Tibial artery (tissue), 4 donors: ENCODE measurements at regions of chr16 and their contacts with region 1.

Region 1: GRCh38 chr16:22677024-22677830 is 136.7 kb upstream of the HS3ST2 start:
- DNase-seq: peak in 1 of 2 donors; percentile 65
- H3K4me3 ChIP-seq: no peak overlapping the region
- H3K27ac ChIP-seq: no peak overlapping the region
- H3K4me1 ChIP-seq: peaks cover 0 to 14% (median 1%) of the 10 kb centered on the region in 4 donors
- H3K27me3 ChIP-seq: peaks cover 0 to 5% of the 10 kb centered on the region in 2 donors
- CTCF ChIP-seq: no peak

Region 2: DNA sequence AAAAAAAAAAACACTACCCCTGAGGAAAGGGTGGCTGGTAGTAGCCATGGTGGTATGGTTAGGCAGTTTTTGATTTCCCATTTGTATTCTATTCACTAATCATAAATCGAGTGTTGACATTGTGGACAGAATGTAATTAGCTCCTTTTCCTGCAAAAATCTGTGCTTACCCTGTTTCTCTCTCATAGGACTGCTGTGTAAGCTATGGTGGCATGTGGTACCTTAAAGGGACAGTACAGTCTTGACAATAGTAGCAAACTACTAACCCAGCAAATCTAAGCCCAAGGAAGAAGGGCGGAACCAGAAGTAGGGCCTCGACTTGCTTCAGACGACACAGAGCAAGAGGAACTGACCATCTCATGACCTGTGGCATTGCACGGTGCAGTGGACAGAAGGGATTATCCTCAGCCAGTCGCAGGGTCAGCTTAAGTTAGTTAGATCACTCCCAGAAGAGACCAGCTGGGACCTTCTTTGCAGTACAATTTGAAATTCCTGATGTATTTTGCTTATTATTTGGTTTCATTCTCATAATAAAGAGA is 343.7 kb before region 1 on chr16:
- intact Hi-C with region 1: no loop called
- DNase-seq: peak in 1 of 2 donors; percentile 54
- H3K4me3 ChIP-seq: no peak overlapping the region
- H3K27ac ChIP-seq: no peak overlapping the region
- H3K4me1 ChIP-seq: no peaks in the 10 kb centered on the region
- H3K27me3 ChIP-seq: no peaks in the 10 kb centered on the region
- CTCF ChIP-seq: no peak

Region 3: DNA sequence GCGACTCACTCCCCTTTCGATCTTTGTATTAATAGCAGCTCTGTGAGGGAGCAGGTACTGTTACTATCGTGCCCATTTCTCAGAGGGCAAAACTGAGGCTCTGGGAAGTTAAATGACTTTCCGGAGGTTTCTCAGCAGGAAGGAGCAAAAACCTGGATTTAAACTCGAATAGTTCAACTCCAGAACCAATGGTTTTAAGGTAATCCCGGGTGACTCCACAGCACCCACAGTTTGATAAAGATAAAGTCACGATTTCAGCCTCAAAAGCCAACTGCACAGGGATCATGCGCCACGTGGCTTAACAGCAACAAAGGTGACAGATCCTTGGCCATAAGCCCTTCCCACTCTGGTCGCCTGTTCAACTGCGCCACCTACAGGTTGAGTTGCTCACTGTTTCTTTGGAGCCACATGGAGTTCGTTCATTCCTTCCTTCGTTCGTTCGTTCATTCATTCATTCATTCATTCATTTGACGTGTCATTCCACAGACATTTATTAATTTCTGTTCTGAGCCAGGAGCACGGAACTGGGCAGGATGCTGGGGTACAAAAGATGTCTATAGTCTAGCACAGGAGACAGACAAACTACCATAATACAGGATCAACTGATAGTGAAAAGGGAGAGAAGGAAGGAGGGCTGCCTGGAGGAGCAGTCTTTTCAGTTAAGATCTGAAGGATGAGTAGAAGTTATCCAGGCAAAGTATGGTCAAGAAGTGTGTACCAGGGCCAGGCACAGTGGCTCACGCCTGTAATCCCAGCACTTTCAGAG is 271.6 kb after region 1 on chr16:
- intact Hi-C with region 1: loop called (anchors 5 kb)
- DNase-seq: peak; percentile 68 to 79
- H3K4me3 ChIP-seq: peak overlapping the region in 1 of 2 donors; percentile 21
- H3K27ac ChIP-seq: no peak overlapping the region
- H3K4me1 ChIP-seq: peaks cover 0 to 11% (median 8%) of the 10 kb centered on the region in 4 donors
- H3K27me3 ChIP-seq: peaks cover 0 to 19% of the 10 kb centered on the region in 2 donors
- CTCF ChIP-seq: peak; percentile 69 to 72